H1 (cell line): ENCODE measurements at regions of chr11 and their contacts with region 1.

Region 1: DNA sequence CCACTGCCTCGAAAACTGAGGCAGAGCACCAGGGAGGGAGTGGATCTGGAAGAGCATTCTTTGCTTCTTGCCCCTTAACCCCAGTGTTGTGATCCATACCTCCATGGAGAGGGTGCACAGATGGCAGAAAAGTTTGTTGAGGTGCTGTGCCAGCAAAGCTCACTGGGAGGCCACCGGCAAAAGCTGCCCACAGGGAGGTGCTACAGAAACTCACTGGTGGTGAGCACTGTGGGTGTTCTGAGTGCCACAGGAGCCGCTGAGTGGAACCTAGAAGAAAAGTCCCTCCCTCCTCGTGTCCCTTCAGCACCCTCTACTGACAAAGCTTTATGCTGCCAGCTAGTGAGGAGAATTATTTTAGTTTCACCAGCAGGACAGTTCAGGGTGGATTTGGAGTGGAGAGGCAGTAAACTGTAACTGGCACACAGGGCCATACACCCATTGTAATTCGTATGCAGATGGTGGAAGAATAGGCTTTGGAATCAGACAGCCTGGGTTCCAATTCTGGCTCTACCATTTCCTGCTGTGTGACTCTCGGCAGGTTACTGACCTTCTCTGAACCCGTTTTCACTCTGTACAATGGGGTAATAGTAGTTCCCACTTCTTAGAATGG is 84.6 kb downstream of the SWAP70 start:
- DNase-seq: peak in 1 of 2 experiments; percentile 64
- H3K4me3 ChIP-seq: no peak overlapping the region
- H3K27ac ChIP-seq: no peak overlapping the region
- H3K4me1 ChIP-seq: no peaks in the 10 kb centered on the region
- H3K27me3 ChIP-seq: no peaks in the 10 kb centered on the region
- CTCF ChIP-seq: peak; percentile 42 to 83 (median 83)
- EP300 ChIP-seq: no peak
- POLR2A ChIP-seq: no peak
- RAD21 ChIP-seq: peak; percentile 88 to 90

Region 2: DNA sequence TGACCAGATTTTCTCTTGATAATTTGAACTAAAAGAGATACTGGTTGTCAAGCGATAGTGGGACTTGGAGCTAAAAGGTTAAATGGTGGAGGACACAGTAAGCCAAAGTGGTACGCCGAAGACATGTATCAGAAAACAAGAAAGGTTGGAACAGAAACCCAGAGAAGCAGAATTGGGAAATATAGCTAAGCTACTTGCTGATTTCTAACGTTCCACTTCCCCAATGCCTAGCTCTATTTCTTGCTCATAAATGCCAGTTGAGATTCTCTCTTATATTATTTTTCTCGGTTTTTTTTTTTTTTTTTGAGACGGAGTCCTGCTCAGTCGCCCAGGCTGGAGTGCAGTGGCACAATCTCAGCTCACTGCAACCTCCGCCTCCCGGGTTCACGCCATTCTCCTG is 446.7 kb before region 1 on chr11:
- CTCF ChIA-PET with region 1: no interaction called
- POLR2A ChIA-PET with region 1: no interaction called
- DNase-seq: no peak
- H3K4me3 ChIP-seq: no peak overlapping the region
- H3K27ac ChIP-seq: no peak overlapping the region
- H3K4me1 ChIP-seq: 0 out of 7 replicates have a peak, but pooled peaks cover 0 to 2% (median 0%) of the 10 kb centered on the region in 4 experiments
- H3K27me3 ChIP-seq: no peaks in the 10 kb centered on the region
- CTCF ChIP-seq: no peak
- EP300 ChIP-seq: no peak
- POLR2A ChIP-seq: no peak
- RAD21 ChIP-seq: no peak

Region 3: GRCh38 chr11:9594267-9595046 is 154.0 kb before region 1 on chr11:
- CTCF ChIA-PET with region 1: interaction called, 34 read pairs
- POLR2A ChIA-PET with region 1: interaction called, 3 read pairs
- DNase-seq: peak in 1 of 2 experiments; percentile 49
- H3K4me3 ChIP-seq: no peak overlapping the region
- H3K27ac ChIP-seq: no peak overlapping the region
- H3K4me1 ChIP-seq: no peaks in the 10 kb centered on the region; a peak in 4 of 7 replicates
- H3K27me3 ChIP-seq: peaks cover 0 to 1% (median 0%) of the 10 kb centered on the region in 4 experiments; a peak in 1 of 7 replicates
- CTCF ChIP-seq: no peak
- EP300 ChIP-seq: no peak
- POLR2A ChIP-seq: no peak
- RAD21 ChIP-seq: no peak

Region 4: GRCh38 chr11:9601037-9601875 is 147.2 kb before region 1 on chr11:
- CTCF ChIA-PET with region 1: interaction called, 130 read pairs
- POLR2A ChIA-PET with region 1: no interaction called
- DNase-seq: peak in 1 of 2 experiments; percentile 52
- H3K4me3 ChIP-seq: no peak overlapping the region
- H3K27ac ChIP-seq: no peak overlapping the region; the same call in 1 of the 2 replicates
- H3K4me1 ChIP-seq: peaks cover 3 to 10% (median 6%) of the 10 kb centered on the region in 4 experiments; a peak in 6 of 7 replicates
- H3K27me3 ChIP-seq: no peaks in the 10 kb centered on the region; a peak in 1 of 7 replicates
- CTCF ChIP-seq: no peak
- EP300 ChIP-seq: no peak
- POLR2A ChIP-seq: no peak
- RAD21 ChIP-seq: no peak

Region 5: GRCh38 chr11:9613118-9613829 is 135.2 kb before region 1 on chr11:
- CTCF ChIA-PET with region 1: interaction called, 130 read pairs
- POLR2A ChIA-PET with region 1: interaction called, 6 read pairs
- DNase-seq: peak; percentile 83 to 96
- H3K4me3 ChIP-seq: peak overlapping the region; percentile 26 to 55 (median 42)
- H3K27ac ChIP-seq: peak overlapping the region; percentile 57; the same call in 1 of the 2 replicates
- H3K4me1 ChIP-seq: peaks cover 0 to 7% (median 2%) of the 10 kb centered on the region in 4 experiments; a peak in 4 of 7 replicates
- H3K27me3 ChIP-seq: peaks cover 0 to 2% (median 0%) of the 10 kb centered on the region in 4 experiments; a peak in 3 of 7 replicates
- CTCF ChIP-seq: peak; percentile 85 to 90 (median 89)
- EP300 ChIP-seq: peak in 1 of 2 experiments; percentile 76; a peak in 1 of 3 replicates
- POLR2A ChIP-seq: peak in 1 of 2 experiments; percentile 63; a peak in 1 of 3 replicates
- RAD21 ChIP-seq: peak; percentile 78 to 81

Region 6: DNA sequence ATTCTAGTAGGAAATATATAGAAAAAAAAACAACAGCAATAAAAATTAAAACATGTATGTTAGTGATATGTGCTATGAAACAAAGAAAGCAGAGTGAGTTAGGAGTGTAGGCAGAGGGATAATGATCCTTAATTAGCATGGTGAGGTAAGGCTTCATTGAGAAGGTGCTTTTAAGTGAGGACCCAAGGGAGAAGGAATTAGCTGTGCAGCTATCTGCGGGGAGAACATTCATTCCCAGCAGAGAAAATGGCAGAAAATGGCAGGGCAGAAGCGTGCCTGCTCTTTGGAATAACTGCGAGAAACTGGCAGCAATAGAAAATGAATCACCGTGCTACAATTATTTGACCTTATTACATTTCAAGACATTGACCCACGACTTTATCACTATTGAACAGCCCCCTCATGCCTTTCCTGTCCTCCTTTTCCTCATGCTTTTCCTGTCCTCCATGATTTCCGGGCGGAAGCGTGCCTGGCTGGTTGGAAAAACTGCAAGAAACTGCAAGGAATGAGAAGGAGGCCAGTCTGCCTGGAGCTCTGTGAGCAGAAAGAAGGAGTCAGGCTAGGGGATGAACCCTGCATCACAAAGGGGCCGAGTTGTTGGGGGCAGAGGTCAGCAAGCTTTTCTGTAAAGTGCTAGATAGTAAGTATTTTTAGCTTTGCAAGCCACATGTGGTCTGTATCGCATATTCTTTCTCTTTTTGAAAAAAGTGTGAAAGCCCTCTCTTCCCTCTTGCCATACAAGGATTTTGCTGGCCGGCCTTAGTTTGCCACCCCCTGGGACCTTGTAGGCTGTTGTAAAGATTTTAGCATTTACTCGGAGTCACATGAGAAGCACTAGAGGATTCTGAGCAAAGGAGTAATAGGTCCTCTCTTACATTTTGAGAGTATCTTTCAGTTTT is 121.7 kb before region 1 on chr11:
- CTCF ChIA-PET with region 1: interaction called, 13 read pairs
- POLR2A ChIA-PET with region 1: interaction called, 4 read pairs
- DNase-seq: peak; percentile 61 to 65
- H3K4me3 ChIP-seq: peak overlapping the region in 1 of 4 experiments; percentile 35; a peak in 2 of 8 replicates
- H3K27ac ChIP-seq: peak overlapping the region; percentile 76; the same call in 1 of the 2 replicates
- H3K4me1 ChIP-seq: peaks cover 4 to 26% (median 18%) of the 10 kb centered on the region in 4 experiments
- H3K27me3 ChIP-seq: no peaks in the 10 kb centered on the region
- CTCF ChIP-seq: no peak
- EP300 ChIP-seq: no peak
- POLR2A ChIP-seq: peak in 1 of 2 experiments; percentile 74; a peak in 1 of 3 replicates
- RAD21 ChIP-seq: 0 out of 4 replicates have a peak, but pooled peaks have one; percentile 1 to 10

Region 7: DNA sequence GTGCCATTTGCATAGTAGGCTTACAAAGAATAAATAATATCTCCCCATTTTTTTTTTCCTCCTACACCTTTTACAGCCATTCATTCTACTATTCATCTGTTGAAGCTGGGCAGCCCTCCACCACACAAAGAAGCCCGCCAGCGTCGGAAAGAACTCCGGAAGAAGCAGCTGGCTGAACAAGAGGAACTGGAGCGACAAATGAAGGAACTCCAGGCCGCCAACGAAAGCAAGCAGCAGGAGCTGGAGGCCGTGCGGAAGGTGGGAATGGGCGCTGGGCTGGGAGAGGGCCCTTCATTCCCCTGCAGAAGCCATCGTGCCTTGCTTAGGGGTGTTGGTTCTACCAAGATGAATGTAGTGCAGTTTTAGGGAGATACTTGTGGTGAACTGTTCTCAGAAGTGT is 16.0 kb before region 1 on chr11:
- CTCF ChIA-PET with region 1: interaction called, 23 read pairs
- POLR2A ChIA-PET with region 1: interaction called, 12 read pairs
- DNase-seq: no peak
- H3K4me3 ChIP-seq: no peak overlapping the region
- H3K27ac ChIP-seq: no peak overlapping the region
- H3K4me1 ChIP-seq: no peaks in the 10 kb centered on the region
- H3K27me3 ChIP-seq: no peaks in the 10 kb centered on the region
- CTCF ChIP-seq: no peak
- EP300 ChIP-seq: no peak
- POLR2A ChIP-seq: no peak
- RAD21 ChIP-seq: no peak

Region 8: GRCh38 chr11:9738116-9738515 is 10.3 kb before region 1 on chr11:
- CTCF ChIA-PET with region 1: interaction called, 23 read pairs
- POLR2A ChIA-PET with region 1: interaction called, 12 read pairs
- DNase-seq: no peak
- H3K4me3 ChIP-seq: no peak overlapping the region
- H3K27ac ChIP-seq: peak overlapping the region; percentile 26; the same call in 1 of the 2 replicates
- H3K4me1 ChIP-seq: no peaks in the 10 kb centered on the region
- H3K27me3 ChIP-seq: no peaks in the 10 kb centered on the region
- CTCF ChIP-seq: no peak
- EP300 ChIP-seq: no peak
- POLR2A ChIP-seq: no peak
- RAD21 ChIP-seq: no peak